ENCODE measurements at regions of chr15 and their contacts with region 1.

Region 1: GRCh38 chr15:45402162-45402954 is 24.0 kb upstream of the GATM start:
- DNase-seq: peak; percentile 94
- H3K4me3 ChIP-seq: peak overlapping the region; percentile 95 to 98
- H3K27ac ChIP-seq: peak overlapping the region; percentile 84 to 93
- H3K4me1 ChIP-seq: peaks cover 5 to 8% of the 10 kb centered on the region in 2 experiments; a peak in 3 of 4 replicates
- H3K27me3 ChIP-seq: no peaks in the 10 kb centered on the region
- CTCF ChIP-seq: no peak; the same call in 1 of the 2 replicates
- EP300 ChIP-seq: no peak
- RAD21 ChIP-seq: no peak

Region 2: DNA sequence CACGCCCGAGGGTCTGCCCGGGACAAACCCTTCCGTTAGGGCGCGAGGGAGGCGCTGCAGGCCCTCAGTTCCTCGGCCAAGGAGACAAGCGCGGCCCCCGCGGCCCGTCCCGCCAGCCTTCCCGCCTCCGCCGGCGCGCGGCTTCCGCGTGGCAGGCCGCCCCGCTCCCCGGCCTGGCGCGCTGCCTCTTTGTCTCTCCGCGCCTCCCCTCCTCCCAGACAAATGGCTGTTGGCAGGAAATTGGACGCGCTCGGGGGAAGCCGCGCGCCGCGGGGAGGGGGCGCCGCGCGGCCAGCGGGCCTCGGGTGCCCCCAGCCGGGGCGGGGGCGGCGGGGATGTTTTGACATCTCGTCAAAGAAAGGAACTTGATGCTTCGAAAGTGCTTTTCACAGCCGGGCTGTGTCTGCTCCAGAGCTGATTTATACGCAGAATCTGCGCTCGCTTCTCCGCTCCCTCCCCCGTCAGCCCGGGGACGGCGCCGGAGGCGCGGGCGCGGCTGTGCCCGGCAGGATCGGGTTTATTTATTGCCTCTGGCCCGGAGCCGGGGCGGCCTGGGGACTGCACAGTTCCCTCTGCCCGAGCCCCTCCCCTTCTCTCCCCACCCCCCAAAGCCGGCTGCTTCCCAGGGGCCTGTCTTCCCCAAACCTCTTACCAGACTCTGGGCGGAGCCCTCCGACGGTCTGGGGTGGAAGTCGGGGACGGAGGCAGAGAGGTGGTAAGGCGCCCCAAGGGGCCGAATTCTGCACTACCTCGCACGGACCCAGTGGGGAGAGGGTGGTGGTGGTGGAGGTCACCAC is 235.3 kb before region 1 on chr15:
- CTCF ChIA-PET with region 1: interaction called, 28 read pairs
- POLR2A ChIA-PET with region 1: interaction called, 5 read pairs
- DNase-seq: peak; percentile 83
- H3K4me3 ChIP-seq: peak overlapping the region; percentile 54 to 72
- H3K27ac ChIP-seq: peak overlapping the region; percentile 84 to 100
- H3K4me1 ChIP-seq: peaks cover 16 to 65% of the 10 kb centered on the region in 2 experiments
- H3K27me3 ChIP-seq: no peaks in the 10 kb centered on the region
- CTCF ChIP-seq: peak; percentile 62
- EP300 ChIP-seq: 0 out of 4 replicates have a peak, but pooled peaks have one; percentile 2 to 22
- RAD21 ChIP-seq: peak; percentile 17; the same call in 1 of the 2 replicates

Region 3: DNA sequence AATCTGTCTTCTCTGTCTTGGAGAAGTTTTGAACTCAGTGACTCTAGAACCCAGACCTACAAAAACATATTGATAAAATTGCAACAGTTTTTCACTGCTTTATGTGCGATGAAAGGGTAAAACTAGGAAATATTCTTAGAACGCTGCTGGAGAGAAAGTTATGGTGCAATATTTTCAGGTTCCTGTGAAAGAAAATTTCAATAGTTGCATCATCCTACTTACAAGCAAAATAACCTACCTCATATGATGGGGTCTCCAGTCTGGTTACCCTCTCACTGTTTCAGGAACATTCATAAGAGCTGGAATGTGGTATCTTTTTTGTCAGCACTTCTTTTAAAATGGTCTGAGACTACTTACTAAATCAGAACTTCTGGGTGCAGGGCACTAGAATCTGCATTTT is 51.1 kb before region 1 on chr15:
- CTCF ChIA-PET with region 1: no interaction called
- POLR2A ChIA-PET with region 1: no interaction called
- DNase-seq: no peak
- H3K4me3 ChIP-seq: no peak overlapping the region
- H3K27ac ChIP-seq: no peak overlapping the region
- H3K4me1 ChIP-seq: no peaks in the 10 kb centered on the region
- H3K27me3 ChIP-seq: no peaks in the 10 kb centered on the region
- CTCF ChIP-seq: no peak
- EP300 ChIP-seq: no peak
- RAD21 ChIP-seq: no peak

Region 4: DNA sequence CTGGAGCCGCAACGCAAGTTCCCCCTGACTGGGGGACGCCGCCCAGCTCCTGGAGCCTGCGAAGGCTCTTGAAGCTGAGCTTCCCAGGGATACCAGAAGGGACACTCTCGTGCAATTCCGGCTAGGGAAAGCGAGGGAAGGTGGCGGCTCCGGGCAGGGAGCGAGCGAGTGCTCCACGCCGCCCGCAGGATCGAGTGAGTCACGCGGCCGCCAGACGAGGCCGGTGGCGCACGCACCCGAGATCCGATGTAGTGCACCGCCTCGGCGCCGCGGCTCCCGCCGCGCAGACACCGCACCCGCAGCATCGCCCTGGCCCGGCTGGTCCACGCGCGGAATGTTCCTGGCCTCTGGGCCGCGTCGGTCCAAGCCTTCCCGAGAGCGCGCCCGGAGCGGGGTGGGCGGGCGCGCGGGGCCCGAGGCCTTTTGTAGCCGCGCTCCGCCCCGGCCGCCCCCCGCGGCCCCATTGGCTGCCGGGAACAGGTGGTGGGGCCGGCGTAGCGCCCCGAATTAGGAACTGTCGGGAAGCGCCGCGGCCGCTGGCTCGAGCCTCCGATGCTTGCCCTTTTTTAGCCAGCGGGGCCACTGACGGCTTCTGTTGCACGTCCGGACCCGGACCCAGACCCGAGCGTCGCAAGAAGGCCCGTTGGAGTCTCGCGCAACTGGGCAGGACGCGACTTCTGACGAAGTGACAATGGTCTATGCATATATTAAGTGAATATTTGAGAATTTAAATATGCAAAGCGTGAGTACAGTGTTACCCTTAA is 24.0 kb before region 1 on chr15 and contains the start of gene GATM:
- CTCF ChIA-PET with region 1: interaction called, 13 read pairs
- POLR2A ChIA-PET with region 1: interaction called, 5 read pairs
- DNase-seq: peak; percentile 93
- H3K4me3 ChIP-seq: peak within 1 kb of the TSS; percentile 54 to 68
- H3K27ac ChIP-seq: no peak within 1 kb of the TSS
- H3K4me1 ChIP-seq: peaks cover 0 to 8% of the 10 kb centered on the region in 2 experiments; a peak in 1 of 4 replicates
- H3K27me3 ChIP-seq: peaks cover 17% of the 10 kb centered on the region; the same call in 1 of the 2 replicates
- CTCF ChIP-seq: peak; percentile 47
- EP300 ChIP-seq: no peak
- RAD21 ChIP-seq: peak; percentile 21; the same call in 1 of the 2 replicates
- polyA plus RNA-seq, gene GATM: 0.54 and 0.58 TPM in 2 replicates

Region 5: GRCh38 chr15:45384700-45385099 is 17.7 kb before region 1 on chr15:
- CTCF ChIA-PET with region 1: interaction called, 13 read pairs
- POLR2A ChIA-PET with region 1: no interaction called
- DNase-seq: no peak
- H3K4me3 ChIP-seq: no peak overlapping the region
- H3K27ac ChIP-seq: no peak overlapping the region
- H3K4me1 ChIP-seq: no peaks in the 10 kb centered on the region; a peak in 1 of 4 replicates
- H3K27me3 ChIP-seq: no peaks in the 10 kb centered on the region; the same call in 1 of the 2 replicates
- CTCF ChIP-seq: no peak
- EP300 ChIP-seq: no peak
- RAD21 ChIP-seq: no peak

Region 6: GRCh38 chr15:45391746-45392583 is 10.4 kb before region 1 on chr15:
- CTCF ChIA-PET with region 1: interaction called, 12 read pairs
- POLR2A ChIA-PET with region 1: no interaction called
- DNase-seq: no peak
- H3K4me3 ChIP-seq: no peak overlapping the region
- H3K27ac ChIP-seq: no peak overlapping the region
- H3K4me1 ChIP-seq: no peaks in the 10 kb centered on the region
- H3K27me3 ChIP-seq: no peaks in the 10 kb centered on the region; the same call in 1 of the 2 replicates
- CTCF ChIP-seq: no peak
- EP300 ChIP-seq: no peak
- RAD21 ChIP-seq: no peak

Region 7: DNA sequence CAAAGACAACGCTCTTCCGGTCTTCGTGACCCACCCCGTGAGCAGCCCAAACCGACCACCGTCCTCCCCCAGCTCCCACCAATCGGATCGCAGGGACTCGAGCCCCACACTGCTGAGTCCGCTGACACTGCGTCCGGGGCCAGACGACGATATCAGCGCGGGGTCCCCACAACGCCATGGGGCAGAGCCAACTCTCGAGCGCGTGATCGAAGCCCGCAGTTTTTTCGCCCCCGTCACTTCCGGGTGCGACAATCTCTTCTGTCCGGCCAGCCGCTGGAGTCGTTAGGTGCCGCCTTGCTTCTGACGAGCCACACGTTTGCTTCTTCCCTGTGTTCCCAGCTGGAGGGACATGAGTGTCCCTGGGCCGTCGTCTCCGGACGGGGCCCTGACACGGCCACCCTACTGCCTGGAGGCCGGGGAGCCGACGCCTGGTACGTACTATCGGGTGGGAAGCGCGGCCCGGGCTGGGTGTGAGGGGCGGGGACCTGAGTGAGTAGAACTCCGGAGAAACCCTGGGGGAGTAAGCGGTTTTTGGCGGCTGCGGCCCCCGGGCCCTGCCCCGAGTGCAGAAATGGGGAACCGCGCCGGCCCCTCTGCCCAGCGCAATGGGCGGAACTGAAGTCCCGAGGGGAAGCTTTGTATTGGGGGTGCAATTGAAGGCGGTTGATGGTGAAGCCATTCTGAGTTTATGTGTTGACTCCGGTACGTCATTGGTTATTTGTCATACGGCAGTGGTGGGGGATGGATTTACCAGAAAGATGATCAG is 184.9 kb after region 1 on chr15 and contains the start of gene BLOC1S6:
- CTCF ChIA-PET with region 1: interaction called, 8 read pairs
- POLR2A ChIA-PET with region 1: interaction called, 10 read pairs
- DNase-seq: peak; percentile 90
- H3K4me3 ChIP-seq: peak within 1 kb of the TSS; percentile 84 to 87
- H3K27ac ChIP-seq: peak within 1 kb of the TSS; percentile 94 to 97
- H3K4me1 ChIP-seq: peaks cover 19 to 24% of the 10 kb centered on the region in 2 experiments; a peak in 3 of 4 replicates
- H3K27me3 ChIP-seq: no peaks in the 10 kb centered on the region
- CTCF ChIP-seq: no peak
- EP300 ChIP-seq: no peak
- RAD21 ChIP-seq: no peak
- polyA plus RNA-seq, gene BLOC1S6: 11.3 and 14.1 TPM in 2 replicates

Measured in SK-N-SH (cell line).